Activated T-helper 1 cell treated with anti-CD3 and anti-CD28 coated beads, Interleukin-12 subunit alpha, Interleukin-12 subunit beta, Interleukin-2, Interleukin-4 antibody, amounts not matched to agents 30 ng/mL and 10 ng/mL and 1 ng/mL, durations not matched to agents 14 hours and 24 hours and 36 hours (primary cell): ENCODE measurements at regions of chr17 and their contacts with region 1.

Region 1: DNA sequence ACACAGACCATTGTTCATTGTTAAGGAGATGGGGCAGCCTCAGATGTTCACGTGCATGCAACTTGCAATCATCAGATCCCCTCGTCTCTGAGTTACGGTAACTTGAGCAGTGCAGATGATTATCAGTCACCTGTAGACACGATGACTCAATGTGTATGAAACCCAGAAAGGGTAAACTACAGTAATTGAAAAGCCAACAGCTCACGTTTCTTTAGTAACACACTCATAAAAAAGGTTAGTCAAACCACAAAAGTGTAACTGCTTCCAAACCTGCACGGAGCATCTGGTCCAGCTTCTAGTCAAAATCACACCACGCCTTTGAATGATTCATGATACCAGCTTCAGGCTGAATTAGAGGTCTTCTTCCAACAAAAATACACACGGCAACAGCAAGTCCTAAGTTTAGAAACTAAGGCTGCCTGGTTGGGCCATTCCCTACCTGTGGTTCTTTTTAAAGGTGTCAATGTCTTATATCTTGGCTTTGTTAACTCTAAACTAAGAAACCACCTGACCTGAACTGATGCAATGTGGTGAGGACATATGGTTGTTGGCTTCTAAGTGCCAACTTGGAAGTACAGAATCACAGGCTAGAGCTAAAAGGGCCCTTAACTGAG is 32.3 kb downstream of the GRB7 start:
- DNase-seq: peak; percentile 63
- H3K4me3 Mint-ChIP-seq: peak overlapping the region; percentile 38
- H3K27ac Mint-ChIP-seq: peak overlapping the region; percentile 56
- H3K4me1 Mint-ChIP-seq: peaks cover 93% of the 10 kb centered on the region
- H3K27me3 Mint-ChIP-seq: no peaks in the 10 kb centered on the region

Region 2: GRCh38 chr17:39194089-39194984 is 575.7 kb before region 1 on chr17:
- intact Hi-C with region 1: no loop called
- DNase-seq: no peak
- H3K4me3 Mint-ChIP-seq: peak overlapping the region; percentile 42
- H3K27ac Mint-ChIP-seq: peak overlapping the region; percentile 23
- H3K4me1 Mint-ChIP-seq: peaks cover 32% of the 10 kb centered on the region
- H3K27me3 Mint-ChIP-seq: no peaks in the 10 kb centered on the region

Region 3: GRCh38 chr17:39730095-39730921 is 39.8 kb before region 1 on chr17 and contains the start of gene MIEN1:
- intact Hi-C with region 1: no loop called
- DNase-seq: peak; percentile 90
- H3K4me3 Mint-ChIP-seq: peak within 1 kb of the TSS; percentile 92
- H3K27ac Mint-ChIP-seq: peak within 1 kb of the TSS; percentile 85
- H3K4me1 Mint-ChIP-seq: peaks cover 11% of the 10 kb centered on the region
- H3K27me3 Mint-ChIP-seq: peaks cover 7% of the 10 kb centered on the region
- total RNA-seq, gene MIEN1: 33.3 and 37.1 TPM in 2 replicates

Region 4: GRCh38 chr17:39794249-39794970 is 24.3 kb after region 1 on chr17:
- intact Hi-C with region 1: loop called (anchors 1 kb)
- DNase-seq: no peak
- H3K4me3 Mint-ChIP-seq: peak overlapping the region; percentile 49
- H3K27ac Mint-ChIP-seq: peak overlapping the region; percentile 73
- H3K4me1 Mint-ChIP-seq: peaks cover 64% of the 10 kb centered on the region
- H3K27me3 Mint-ChIP-seq: no peaks in the 10 kb centered on the region

Region 5: DNA sequence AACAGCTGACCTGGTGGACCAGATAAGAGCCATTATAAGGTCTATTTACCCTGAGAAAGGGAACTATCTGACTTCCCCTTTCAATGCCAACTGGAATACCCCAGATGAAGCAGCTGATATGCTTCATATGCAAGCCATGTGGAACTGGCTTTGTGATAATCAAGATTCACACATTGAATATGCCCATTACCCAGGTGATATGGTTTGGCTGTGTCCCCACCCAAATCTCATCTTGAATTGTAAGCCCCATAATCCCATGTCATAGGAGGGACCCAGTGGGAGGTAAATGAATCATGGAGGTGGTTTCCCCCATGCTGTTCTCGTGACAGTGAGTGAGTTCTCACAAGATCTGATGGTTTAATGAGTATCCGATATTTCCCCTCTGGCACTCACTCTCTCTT is 52.0 kb after region 1 on chr17:
- intact Hi-C with region 1: loop called (anchors 1 kb)
- DNase-seq: no peak
- H3K4me3 Mint-ChIP-seq: no peak overlapping the region
- H3K27ac Mint-ChIP-seq: peak overlapping the region; percentile 47
- H3K4me1 Mint-ChIP-seq: peaks cover 45% of the 10 kb centered on the region
- H3K27me3 Mint-ChIP-seq: no peaks in the 10 kb centered on the region

Region 6: GRCh38 chr17:39939588-39940419 is 169.7 kb after region 1 on chr17:
- intact Hi-C with region 1: loop called (anchors 1 kb)
- DNase-seq: peak; percentile 71
- H3K4me3 Mint-ChIP-seq: peak overlapping the region; percentile 31
- H3K27ac Mint-ChIP-seq: peak overlapping the region; percentile 87
- H3K4me1 Mint-ChIP-seq: peaks cover 25% of the 10 kb centered on the region
- H3K27me3 Mint-ChIP-seq: peaks cover 4% of the 10 kb centered on the region